HCT116 (cell line): ENCODE measurements at regions of chr20 and their contacts with region 1.

Region 1: DNA sequence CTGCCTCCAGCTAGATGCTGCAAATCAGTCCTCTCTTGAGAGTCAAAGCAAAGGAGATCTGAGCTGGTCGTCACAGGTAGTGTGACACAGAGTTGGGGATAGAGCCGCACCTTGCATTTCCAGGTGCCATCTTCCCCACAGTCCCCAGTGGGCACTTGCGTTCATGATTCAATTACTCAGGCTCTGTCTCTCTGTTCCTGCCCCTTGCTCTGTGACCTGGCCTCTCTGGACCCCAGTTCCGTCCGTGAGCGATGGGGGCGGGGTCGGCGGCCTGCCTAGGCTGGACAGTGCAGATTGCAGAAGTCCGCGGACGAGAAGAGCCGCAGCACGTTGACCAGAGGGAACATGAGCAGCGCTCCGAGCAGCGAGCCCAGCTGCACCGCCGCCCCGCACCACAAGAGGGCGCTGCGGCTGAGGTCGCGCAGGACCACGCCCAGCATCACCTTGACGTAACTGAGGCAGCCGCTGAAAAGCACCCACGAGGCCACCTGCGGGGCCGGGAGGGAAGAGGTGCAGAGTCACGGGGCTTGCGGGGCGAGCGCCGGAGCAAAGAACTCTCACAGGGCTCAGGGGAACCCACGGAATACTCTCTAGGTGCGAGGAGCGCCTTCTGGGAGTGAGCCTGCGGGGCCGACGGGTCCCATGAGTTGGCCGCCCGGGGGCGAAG is 7.4 kb downstream of the SLC52A3 start:
- DNase-seq: peak; percentile 47
- ATAC-seq: peak; percentile 98
- H3K4me3 ChIP-seq: peak overlapping the region in 1 of 2 experiments; percentile 27; a peak in 1 of 4 replicates
- H3K27ac ChIP-seq: no peak overlapping the region
- H3K4me1 ChIP-seq: peaks cover 0 to 18% of the 10 kb centered on the region in 2 experiments; a peak in 2 of 4 replicates
- H3K27me3 ChIP-seq: no peaks in the 10 kb centered on the region
- CTCF ChIP-seq: peak; percentile 70 to 98 (median 97)
- POLR2A ChIP-seq: no peak
- RAD21 ChIP-seq: peak; percentile 51

Region 2: DNA sequence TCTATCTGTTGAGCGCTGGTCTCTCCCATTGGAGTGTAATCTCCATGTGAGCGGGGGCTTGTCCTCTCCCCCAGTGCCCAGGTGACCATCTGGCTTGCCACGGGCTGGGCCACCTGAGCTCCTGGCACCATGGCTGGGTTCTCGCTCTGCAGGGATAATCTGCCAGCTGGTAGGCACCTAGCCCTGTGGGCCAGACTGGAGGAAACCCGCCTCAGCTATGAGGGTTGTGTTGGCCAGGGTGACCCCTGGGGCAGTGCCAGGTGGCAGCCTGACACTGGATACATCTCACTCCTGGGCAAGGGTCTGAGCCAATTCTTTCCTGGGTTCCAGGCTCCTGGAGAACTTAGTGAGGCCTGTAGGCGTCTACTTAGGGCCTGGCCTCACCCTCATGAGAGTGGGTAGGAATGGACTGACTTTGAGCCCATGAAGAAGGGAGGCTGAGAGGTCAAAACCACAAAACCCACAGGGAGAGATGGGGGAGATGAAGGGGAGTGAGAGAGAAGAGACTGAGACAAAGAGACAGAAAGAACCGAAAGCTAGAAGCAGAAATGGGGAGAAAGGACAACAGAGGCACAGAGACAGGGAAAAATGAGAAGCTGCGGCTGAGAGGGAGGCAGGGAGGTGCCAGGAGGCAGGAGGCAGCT is 13.3 kb after region 1 on chr20:
- CTCF ChIA-PET with region 1: interaction called, 10 read pairs
- POLR2A ChIA-PET with region 1: no interaction called
- RAD21 ChIA-PET with region 1: no interaction called
- intact Hi-C with region 1: no loop called
- DNase-seq: no peak
- ATAC-seq: no peak
- H3K4me3 ChIP-seq: no peak overlapping the region
- H3K27ac ChIP-seq: no peak overlapping the region
- H3K4me1 ChIP-seq: peaks cover 4 to 21% of the 10 kb centered on the region in 2 experiments; a peak in 3 of 4 replicates
- H3K27me3 ChIP-seq: no peaks in the 10 kb centered on the region
- CTCF ChIP-seq: no peak
- POLR2A ChIP-seq: no peak
- RAD21 ChIP-seq: no peak